ENCODE measurements at regions of chr20 and their contacts with region 1.

Region 1: GRCh38 chr20:2756056-2756611 is 44.3 kb downstream of the CPXM1 start:
- DNase-seq: no peak
- ATAC-seq: peak; percentile 51

Region 2: GRCh38 chr20:3000852-3001523 is 244.9 kb after region 1 on chr20:
- intact Hi-C with region 1: loop called (anchors 5 kb)
- DNase-seq: no peak
- ATAC-seq: peak; percentile 83